Activated CD4-positive, alpha-beta T cell treated with anti-CD3 and anti-CD28 coated beads for 36 hours (primary cell): ENCODE measurements at regions of chr2 and their contacts with region 1.

Region 1: DNA sequence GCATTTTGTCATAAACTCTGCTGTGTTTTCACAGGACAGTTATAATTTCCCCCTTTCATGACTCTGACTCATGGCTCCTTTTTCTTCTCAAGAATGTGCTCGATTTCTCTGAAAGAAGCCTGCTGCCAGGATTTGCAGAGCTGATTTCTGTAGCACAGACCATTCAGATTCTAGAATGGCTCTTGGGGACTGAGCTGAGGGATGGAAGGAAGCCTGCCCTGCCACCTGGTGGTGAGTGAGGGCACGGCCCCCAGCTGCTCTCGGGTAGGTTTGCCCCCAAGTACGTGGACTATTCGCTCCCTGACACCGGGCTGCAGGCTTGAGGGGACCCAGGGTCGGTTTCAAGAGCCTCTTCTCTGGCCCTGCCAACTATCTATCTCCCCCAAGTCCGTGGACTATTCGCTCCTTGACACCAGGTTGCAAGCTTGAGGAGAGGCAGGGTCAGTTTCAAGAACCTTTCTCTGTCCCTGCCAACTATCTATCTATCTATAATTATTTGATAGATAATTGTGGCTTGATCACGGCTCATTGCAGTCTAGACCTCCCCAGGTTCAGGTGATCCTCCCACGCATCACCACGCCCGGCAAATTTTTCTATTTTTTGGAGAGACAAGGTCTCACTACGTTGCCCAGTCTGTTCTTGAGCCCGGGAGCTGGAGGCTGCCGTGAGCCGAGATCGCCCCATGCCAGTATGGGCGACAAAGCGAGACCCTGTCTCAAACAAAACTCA is 1.4 kb upstream of the SMYD5 start:
- DNase-seq: peak; percentile 89
- ATAC-seq: peak; percentile 79
- H3K4me3 Mint-ChIP-seq: no peak overlapping the region
- H3K27ac Mint-ChIP-seq: no peak overlapping the region
- H3K4me1 Mint-ChIP-seq: peaks cover 32% of the 10 kb centered on the region
- H3K27me3 Mint-ChIP-seq: peaks cover 7% of the 10 kb centered on the region

Region 2: DNA sequence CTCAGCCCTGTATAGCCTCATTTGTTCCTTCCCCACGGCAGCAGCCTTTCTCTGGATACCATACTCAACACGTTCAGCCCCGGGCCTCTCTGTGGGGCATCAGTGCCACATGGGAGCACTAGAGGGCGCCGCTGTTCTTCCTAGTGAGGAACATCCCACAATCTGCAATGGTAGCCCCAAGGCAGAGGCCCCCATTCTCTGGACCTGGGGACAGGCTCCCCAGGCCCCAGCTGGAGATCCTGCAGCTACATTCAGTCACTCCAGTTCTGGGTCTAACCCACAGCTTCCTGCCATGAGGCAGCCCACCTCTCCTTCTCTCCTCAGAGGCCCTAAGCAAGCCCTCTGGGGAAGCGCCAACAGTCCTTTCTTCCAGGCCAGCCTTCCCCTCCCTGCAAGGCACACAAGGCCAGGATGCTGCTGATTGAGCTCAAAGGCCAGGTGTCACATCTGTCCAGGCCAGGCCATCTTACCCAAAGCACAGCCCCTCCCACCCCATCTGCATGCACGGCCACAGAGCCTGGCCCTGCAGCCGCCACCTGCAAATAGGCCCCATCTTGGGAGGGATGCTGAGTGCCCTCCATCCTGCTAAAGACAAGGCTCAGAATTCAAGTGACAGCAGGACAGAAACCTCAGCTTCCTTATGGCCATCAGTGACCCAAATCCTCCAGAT is 126.8 kb before region 1 on chr2:
- CTCF ChIA-PET with region 1: interaction called, 15 read pairs
- POLR2A ChIA-PET with region 1: no interaction called
- intact Hi-C with region 1: loop called in 1 of 2 experiments (anchors 1 kb)
- DNase-seq: peak; percentile 91
- ATAC-seq: peak; percentile 98
- H3K4me3 Mint-ChIP-seq: no peak overlapping the region
- H3K27ac Mint-ChIP-seq: no peak overlapping the region
- H3K4me1 Mint-ChIP-seq: no peaks in the 10 kb centered on the region
- H3K27me3 Mint-ChIP-seq: no peaks in the 10 kb centered on the region

Region 3: GRCh38 chr2:73156539-73157124 is 56.0 kb before region 1 on chr2:
- CTCF ChIA-PET with region 1: interaction called, 10 read pairs
- POLR2A ChIA-PET with region 1: no interaction called
- intact Hi-C with region 1: no loop called
- DNase-seq: peak; percentile 73
- ATAC-seq: peak; percentile 61
- H3K4me3 Mint-ChIP-seq: no peak overlapping the region
- H3K27ac Mint-ChIP-seq: no peak overlapping the region
- H3K4me1 Mint-ChIP-seq: no peaks in the 10 kb centered on the region
- H3K27me3 Mint-ChIP-seq: peaks cover 31% of the 10 kb centered on the region

Region 4: DNA sequence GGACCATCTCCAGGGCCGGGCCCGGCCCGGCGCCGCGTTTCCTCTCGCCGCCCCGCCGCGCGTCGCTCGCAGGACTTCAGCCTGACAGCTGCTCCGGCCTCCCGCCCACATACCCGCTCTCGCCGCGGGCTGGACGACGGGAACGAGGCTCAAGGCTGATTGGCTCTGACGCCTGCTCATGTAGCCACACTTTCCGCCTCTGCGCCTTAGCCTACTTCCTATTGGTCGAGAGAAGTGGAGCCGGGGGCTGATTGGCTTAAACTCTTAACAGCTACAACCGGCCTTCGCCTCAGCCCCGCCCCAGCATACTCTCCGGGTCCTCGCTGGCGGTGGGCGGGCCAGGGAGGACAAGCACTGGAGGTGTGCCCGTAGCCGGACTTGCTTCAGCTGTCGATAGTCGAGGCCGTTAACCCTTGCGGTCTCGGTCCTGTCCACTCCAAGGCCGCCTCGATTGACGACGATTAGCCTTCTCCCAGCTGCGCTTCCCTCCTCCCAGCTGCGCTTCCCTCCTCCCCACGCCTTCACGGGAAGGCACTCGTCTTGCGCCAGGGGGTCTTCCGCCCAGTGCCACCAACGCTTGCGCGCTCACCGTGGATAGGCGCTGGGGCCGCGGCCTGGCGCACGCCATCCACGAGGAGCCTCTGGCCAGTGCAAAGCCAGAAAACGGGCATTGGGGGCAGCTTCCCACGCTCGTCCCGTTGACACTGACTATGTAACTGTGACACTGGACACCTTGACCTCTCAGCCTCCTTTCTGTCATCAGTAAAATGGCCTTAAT is 20.7 kb after region 1 on chr2 and contains the start of gene PRADC1:
- CTCF ChIA-PET with region 1: interaction called, 37 read pairs
- POLR2A ChIA-PET with region 1: interaction called, 8 read pairs
- intact Hi-C with region 1: loop called (anchors 1 kb)
- DNase-seq: peak; percentile 96
- ATAC-seq: peak; percentile 89
- H3K4me3 Mint-ChIP-seq: peak within 1 kb of the TSS; percentile 92
- H3K27ac Mint-ChIP-seq: peak within 1 kb of the TSS; percentile 98
- H3K4me1 Mint-ChIP-seq: peaks cover 32% of the 10 kb centered on the region
- H3K27me3 Mint-ChIP-seq: no peaks in the 10 kb centered on the region
- total RNA-seq, gene PRADC1: 11.8 to 12.1 TPM

Region 5: GRCh38 chr2:73284296-73285158 is 71.9 kb after region 1 on chr2 and contains the start of gene FBXO41:
- CTCF ChIA-PET with region 1: no interaction called
- POLR2A ChIA-PET with region 1: no interaction called
- intact Hi-C with region 1: loop called in 1 of 2 experiments (anchors 1 kb)
- DNase-seq: peak; percentile 86
- ATAC-seq: peak; percentile 85
- H3K4me3 Mint-ChIP-seq: peak within 1 kb of the TSS; percentile 78
- H3K27ac Mint-ChIP-seq: peak within 1 kb of the TSS; percentile 75
- H3K4me1 Mint-ChIP-seq: peaks cover 15% of the 10 kb centered on the region
- H3K27me3 Mint-ChIP-seq: peaks cover 19% of the 10 kb centered on the region
- total RNA-seq, gene FBXO41: 27.7 to 29.5 TPM

Region 6: DNA sequence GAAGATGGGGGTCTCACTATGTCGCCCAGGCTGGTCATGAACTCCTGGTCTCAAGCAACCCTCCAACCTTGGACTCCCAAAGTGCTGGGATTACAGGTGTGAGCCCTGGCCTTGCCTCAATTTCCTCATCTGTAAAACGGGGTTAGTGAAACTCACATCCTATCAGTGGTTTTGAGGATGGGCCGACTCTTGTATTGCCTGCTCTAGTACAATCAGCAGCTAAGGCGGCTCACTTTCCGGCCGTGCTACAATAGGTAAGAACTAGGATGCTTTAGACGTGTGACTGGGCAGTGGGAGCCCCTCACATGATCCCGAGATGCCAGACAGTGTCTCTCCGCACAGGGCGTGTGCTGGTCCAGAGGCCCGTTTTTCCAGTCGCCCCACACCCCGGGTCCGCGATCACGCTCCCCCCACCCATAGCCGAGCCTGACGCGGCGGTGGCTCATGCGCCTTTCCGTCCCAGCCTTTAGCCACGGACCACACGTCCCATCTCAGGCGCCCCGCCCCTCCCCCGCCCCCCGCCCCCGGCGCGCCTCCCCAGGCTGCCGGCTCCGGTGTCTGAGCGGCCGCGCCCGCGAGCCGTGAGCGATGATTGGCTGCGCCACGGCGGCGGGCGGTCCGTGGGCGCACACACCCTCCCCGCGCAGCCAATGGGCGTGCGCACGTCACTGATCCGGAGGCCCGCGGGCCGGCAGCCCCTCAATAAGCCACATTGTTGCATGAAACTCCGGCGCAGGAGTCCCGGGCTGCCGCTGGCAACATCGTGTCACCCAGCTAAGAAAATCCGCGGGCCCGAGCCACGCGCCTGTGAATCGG is 1621.0 kb after region 1 on chr2 and contains the start of gene HK2:
- CTCF ChIA-PET with region 1: no interaction called
- POLR2A ChIA-PET with region 1: no interaction called
- intact Hi-C with region 1: loop called in 1 of 2 experiments (anchors 10 kb)
- DNase-seq: peak; percentile 93
- ATAC-seq: peak; percentile 86
- H3K4me3 Mint-ChIP-seq: peak within 1 kb of the TSS; percentile 89
- H3K27ac Mint-ChIP-seq: peak within 1 kb of the TSS; percentile 95
- H3K4me1 Mint-ChIP-seq: peaks cover 48% of the 10 kb centered on the region
- H3K27me3 Mint-ChIP-seq: no peaks in the 10 kb centered on the region
- total RNA-seq, gene HK2: 84.4 to 105 TPM